ENCODE measurements at regions of chr12 and their contacts with region 1.

Region 1: DNA sequence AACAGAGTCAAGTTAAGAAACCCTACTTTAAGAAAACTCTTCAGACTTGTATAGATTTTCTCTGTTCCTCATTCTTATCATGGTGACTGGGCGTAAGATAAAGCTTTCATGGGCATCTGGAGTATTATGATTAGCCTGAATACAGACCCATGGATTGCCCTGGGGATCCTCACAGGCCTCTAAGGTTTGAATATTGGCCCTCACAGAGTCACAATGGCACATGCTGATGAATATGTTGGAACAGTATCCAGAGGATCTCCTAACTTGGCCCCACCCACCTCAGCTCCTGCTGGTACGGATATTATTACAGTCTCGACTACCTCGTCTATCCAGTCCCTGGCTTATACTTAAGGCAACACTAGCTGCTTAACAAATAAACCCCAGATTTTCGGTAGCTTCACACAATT is 8.1 kb downstream of the OSBPL8 start:
- DNase-seq: no peak
- ATAC-seq: peak; percentile 28
- H3K4me3 ChIP-seq: no peak overlapping the region
- H3K4me3 Mint-ChIP-seq: peak overlapping the region in 7 of 10 donors; percentile 2 to 71 (median 28)
- H3K27ac ChIP-seq: no peak overlapping the region
- H3K27ac Mint-ChIP-seq: peak overlapping the region in 2 of 9 donors; percentile 42 to 64
- H3K4me1 ChIP-seq: peaks cover 22 to 59% of the 10 kb centered on the region in 2 donors
- H3K4me1 Mint-ChIP-seq: peaks cover 65 to 99% (median 92%) of the 10 kb centered on the region in 7 donors
- H3K27me3 ChIP-seq: no peaks in the 10 kb centered on the region
- H3K27me3 Mint-ChIP-seq: no peaks in the 10 kb centered on the region

Region 2: DNA sequence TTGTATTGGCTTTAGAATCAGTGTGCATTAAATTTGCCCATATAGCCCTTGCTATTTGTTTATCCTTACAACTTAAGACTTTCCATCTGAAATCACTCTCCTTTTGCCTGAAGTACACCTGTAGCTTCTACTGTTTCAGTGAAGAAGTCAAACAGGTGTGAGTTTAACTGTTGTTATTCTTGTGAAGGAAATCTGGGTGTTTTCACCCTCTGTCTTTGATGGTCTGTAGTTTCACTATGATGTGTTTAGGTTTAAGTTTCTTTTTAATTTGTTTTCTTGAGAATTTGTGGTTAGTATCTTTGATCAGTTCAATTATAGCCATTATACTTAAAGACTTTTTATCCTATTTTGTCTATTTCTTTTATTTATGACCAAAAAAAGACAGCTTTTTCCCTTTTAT is 134.4 kb before region 1 on chr12:
- CTCF ChIA-PET with region 1: no interaction called
- POLR2A ChIA-PET with region 1: no interaction called
- intact Hi-C with region 1: loop called (anchors 5 kb)
- DNase-seq: no peak
- ATAC-seq: no peak
- H3K4me3 ChIP-seq: no peak overlapping the region
- H3K4me3 Mint-ChIP-seq: peak overlapping the region in 1 of 10 donors; percentile 23
- H3K27ac ChIP-seq: no peak overlapping the region
- H3K27ac Mint-ChIP-seq: peak overlapping the region in 5 of 9 donors; percentile 4 to 52 (median 48)
- H3K4me1 ChIP-seq: no peaks in the 10 kb centered on the region
- H3K4me1 Mint-ChIP-seq: peaks cover 13 to 37% (median 26%) of the 10 kb centered on the region in 7 donors
- H3K27me3 ChIP-seq: no peaks in the 10 kb centered on the region
- H3K27me3 Mint-ChIP-seq: no peaks in the 10 kb centered on the region

Region 3: DNA sequence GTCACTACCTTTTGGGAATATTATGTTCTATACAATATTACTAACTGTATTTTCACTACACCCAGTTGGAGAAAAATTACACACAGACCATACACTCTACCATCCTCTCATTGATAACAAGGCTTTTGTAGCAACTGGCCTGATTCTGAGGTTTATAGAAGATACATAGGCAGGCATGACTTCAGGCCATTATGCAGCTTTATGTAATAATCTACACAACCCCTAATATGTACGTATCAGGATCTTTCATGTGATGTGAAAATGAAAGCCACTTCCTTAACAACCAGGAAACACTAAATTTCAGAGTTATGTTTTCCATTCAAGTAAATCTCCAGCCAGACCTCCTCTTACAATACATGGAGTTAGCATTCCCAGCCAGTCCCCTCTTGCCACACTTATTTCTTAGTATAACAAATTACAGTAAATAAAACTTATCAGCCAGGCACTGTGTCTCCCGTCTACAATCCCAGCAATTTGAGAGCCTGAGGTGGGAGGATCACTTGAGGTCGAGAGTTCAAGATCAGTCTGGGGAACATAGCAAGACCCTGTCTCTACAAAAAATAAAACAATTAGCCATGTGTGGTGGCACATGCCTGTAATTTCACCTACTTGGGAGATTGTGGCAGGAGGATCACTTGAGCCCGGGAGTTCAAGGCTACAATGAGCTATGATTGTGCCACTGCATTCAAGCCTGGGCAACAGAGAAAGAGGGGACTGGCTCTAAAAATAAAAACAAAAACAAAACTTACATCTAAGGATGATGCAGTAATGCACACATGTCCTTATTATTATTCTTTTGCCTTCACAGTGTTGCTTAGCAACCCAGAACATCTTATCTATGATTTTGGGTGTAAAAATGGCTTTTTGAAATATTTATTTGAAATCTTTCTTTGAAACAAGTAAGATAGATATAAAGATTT is 18.5 kb after region 1 on chr12:
- CTCF ChIA-PET with region 1: no interaction called
- POLR2A ChIA-PET with region 1: interaction called, 3 read pairs
- intact Hi-C with region 1: loop called in 1 of 2 experiments (anchors 2 kb)
- DNase-seq: peak in 5 of 9 donors; percentile 23 to 49 (median 44)
- ATAC-seq: peak; percentile 74
- H3K4me3 ChIP-seq: no peak overlapping the region
- H3K4me3 Mint-ChIP-seq: peak overlapping the region in 8 of 10 donors; percentile 0 to 64 (median 24)
- H3K27ac ChIP-seq: no peak overlapping the region
- H3K27ac Mint-ChIP-seq: peak overlapping the region in 7 of 9 donors; percentile 16 to 73 (median 55)
- H3K4me1 ChIP-seq: peaks cover 0 to 8% of the 10 kb centered on the region in 2 donors
- H3K4me1 Mint-ChIP-seq: peaks cover 6 to 11% (median 8%) of the 10 kb centered on the region in 7 donors
- H3K27me3 ChIP-seq: no peaks in the 10 kb centered on the region
- H3K27me3 Mint-ChIP-seq: no peaks in the 10 kb centered on the region